Breast epithelium (tissue), 4 donors: ENCODE measurements at regions of chr15 and their contacts with region 1.

Region 1: GRCh38 chr15:101368086-101368780 is 73.2 kb upstream of the SNRPA1 start:
- DNase-seq: no peak
- H3K4me3 ChIP-seq: no peak overlapping the region
- H3K27ac ChIP-seq: no peak overlapping the region
- H3K4me1 ChIP-seq: no peaks in the 10 kb centered on the region
- H3K27me3 ChIP-seq: no peaks in the 10 kb centered on the region
- CTCF ChIP-seq: no peak
- POLR2A ChIP-seq: no peak

Region 2: DNA sequence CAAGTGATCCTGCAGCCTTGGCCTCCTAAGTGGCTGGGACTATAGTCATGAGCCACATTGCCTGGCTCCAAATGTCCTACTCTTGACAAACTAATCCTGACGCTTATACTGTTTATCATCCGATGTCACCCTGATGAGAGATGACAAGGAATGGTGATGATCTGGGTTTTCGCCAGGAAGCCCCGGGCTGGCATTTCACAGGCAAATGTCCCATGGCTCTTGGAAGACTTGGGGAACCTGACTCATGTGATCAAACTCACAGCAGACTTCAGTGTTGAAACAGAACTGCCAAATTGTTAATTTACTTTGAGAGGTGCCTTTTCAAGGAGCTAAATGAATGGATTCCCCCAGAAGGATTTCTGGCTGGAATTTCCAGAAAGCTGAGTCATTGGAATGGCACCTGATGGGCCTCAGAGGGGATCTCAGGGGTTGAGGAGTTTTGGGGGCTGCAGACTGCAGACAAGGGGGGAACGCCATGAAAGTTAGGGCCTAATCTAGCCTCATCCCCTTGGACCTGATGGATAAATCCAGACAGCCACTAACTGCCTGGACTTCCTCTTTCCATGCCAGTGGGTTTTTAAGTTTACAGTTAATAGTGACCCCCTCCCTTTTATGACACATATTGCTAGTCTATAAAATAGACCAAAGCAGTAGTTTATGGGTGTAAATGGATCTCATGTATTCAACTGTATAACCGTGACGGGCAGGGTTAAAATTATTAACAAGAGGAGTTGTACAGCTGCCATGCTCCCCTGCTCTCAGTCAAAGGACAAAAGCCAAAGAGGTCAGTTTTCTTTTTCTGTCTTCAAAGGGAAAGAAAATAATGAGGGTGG is 263.0 kb before region 1 on chr15:
- intact Hi-C with region 1: no loop called
- DNase-seq: no peak
- H3K4me3 ChIP-seq: no peak overlapping the region
- H3K27ac ChIP-seq: no peak overlapping the region
- H3K4me1 ChIP-seq: no peaks in the 10 kb centered on the region
- H3K27me3 ChIP-seq: no peaks in the 10 kb centered on the region
- CTCF ChIP-seq: no peak
- POLR2A ChIP-seq: no peak

Region 3: GRCh38 chr15:101207867-101208288 is 160.4 kb before region 1 on chr15:
- intact Hi-C with region 1: no loop called
- DNase-seq: no peak
- H3K4me3 ChIP-seq: no peak overlapping the region
- H3K27ac ChIP-seq: no peak overlapping the region
- H3K4me1 ChIP-seq: peaks cover 0 to 9% of the 10 kb centered on the region in 2 donors
- H3K27me3 ChIP-seq: no peaks in the 10 kb centered on the region
- CTCF ChIP-seq: no peak
- POLR2A ChIP-seq: no peak

Region 4: GRCh38 chr15:101391981-101392640 is 23.9 kb after region 1 on chr15:
- intact Hi-C with region 1: no loop called
- DNase-seq: no peak
- H3K4me3 ChIP-seq: no peak overlapping the region
- H3K27ac ChIP-seq: no peak overlapping the region
- H3K4me1 ChIP-seq: no peaks in the 10 kb centered on the region
- H3K27me3 ChIP-seq: no peaks in the 10 kb centered on the region
- CTCF ChIP-seq: no peak
- POLR2A ChIP-seq: no peak

Region 5: GRCh38 chr15:101424984-101425383 is 56.8 kb after region 1 on chr15:
- intact Hi-C with region 1: loop called (anchors 2 kb)
- DNase-seq: peak in 1 of 2 donors; percentile 9
- H3K4me3 ChIP-seq: no peak overlapping the region
- H3K27ac ChIP-seq: no peak overlapping the region
- H3K4me1 ChIP-seq: no peaks in the 10 kb centered on the region
- H3K27me3 ChIP-seq: no peaks in the 10 kb centered on the region
- CTCF ChIP-seq: no peak
- POLR2A ChIP-seq: no peak

Region 6: GRCh38 chr15:101698291-101698690 is 330.1 kb after region 1 on chr15:
- intact Hi-C with region 1: no loop called
- DNase-seq: no peak
- H3K4me3 ChIP-seq: no peak overlapping the region
- H3K27ac ChIP-seq: no peak overlapping the region
- H3K4me1 ChIP-seq: no peaks in the 10 kb centered on the region
- H3K27me3 ChIP-seq: no peaks in the 10 kb centered on the region
- CTCF ChIP-seq: no peak
- POLR2A ChIP-seq: no peak